Astrocyte of the cerebellum (primary cell): ENCODE measurements at regions of chr20 and their contacts with region 1.

Region 1: GRCh38 chr20:58236612-58237330 is 8.3 kb upstream of the ANKRD60 start:
- DNase-seq: peak; percentile 27
- H3K4me3 ChIP-seq: peak overlapping the region; percentile 43
- CTCF ChIP-seq: peak; percentile 96

Region 2: DNA sequence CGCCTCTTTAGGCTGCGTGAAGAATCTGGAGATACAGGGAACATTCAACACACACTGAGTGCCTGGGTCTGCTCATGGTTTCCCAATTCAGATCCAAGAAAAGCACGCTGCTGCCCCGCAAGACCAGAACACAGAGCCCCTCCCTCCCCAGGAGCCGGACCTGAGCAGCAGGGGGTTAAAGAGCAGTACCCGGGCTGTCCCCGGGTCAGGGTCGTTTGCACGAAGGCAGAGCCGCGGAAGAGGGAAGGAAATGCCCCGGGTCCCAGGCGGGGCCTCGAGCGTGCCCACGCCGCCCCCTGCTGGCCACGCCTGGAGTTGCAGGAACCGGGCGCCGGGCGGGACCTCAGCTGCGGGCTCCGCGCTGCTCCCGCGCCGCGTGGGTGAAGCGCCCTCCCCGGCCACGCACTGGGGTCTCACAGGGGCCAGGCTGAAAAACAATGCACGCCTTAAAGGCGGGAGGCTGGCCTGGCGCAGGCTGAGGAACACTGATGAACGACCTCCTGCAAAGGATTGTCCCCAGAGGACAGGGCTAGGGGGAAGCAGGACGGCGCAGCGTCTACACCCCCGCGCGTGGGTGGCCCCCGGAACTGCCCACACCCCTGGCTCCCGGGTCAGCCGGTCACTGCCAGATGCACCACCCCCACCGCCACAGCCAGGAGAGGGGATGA is 57.2 kb before region 1 on chr20:
- in situ Hi-C with region 1: no loop called
- DNase-seq: peak; percentile 15
- H3K4me3 ChIP-seq: peak overlapping the region; percentile 14
- CTCF ChIP-seq: peak; percentile 87

Region 3: GRCh38 chr20:58271606-58272402 is 35.0 kb after region 1 on chr20:
- in situ Hi-C with region 1: no loop called
- DNase-seq: no peak
- H3K4me3 ChIP-seq: no peak overlapping the region
- CTCF ChIP-seq: no peak

Region 4: DNA sequence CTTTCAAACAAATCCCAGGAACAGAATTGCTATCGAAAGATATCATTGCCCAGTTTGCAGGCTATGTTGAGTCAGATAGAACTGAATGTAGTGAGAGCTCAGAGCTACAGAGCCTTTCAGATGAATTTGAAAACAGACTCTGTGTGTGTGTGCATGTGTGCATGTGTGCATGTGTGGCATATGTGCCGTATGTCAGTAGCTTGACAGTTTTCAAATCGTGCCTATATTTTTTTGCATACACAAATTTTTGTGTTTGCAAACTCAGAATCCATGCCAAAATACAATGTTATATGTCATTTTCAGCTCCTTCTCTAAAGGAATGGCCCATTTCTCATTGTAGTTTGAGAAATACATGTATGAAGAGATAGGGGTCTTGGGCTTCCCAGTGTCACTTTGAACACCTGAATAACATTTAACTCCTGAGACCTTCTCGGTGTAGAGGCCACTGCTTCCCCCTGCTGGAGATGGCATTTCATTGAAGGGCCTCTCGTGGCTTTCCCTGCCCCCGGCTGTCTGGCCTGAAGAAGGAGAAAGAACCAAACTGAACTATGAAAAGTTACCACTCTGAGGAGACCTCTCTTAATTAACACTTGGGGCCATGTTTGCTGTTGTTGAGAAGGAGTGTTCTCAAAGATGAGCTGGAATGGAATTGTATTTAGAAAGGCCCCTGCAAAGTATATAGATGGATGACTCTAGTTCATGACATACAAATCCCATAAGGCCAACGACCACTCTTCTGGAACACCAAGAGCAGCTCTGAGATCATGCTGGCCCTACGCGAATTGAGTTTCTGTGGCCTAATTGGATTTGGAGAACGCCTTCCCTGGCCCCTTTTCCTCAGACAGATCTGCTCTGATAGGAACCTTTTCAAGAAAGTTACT is 211.0 kb after region 1 on chr20:
- in situ Hi-C with region 1: loop called (anchors 10 kb)
- DNase-seq: peak; percentile 28
- H3K4me3 ChIP-seq: no peak overlapping the region
- CTCF ChIP-seq: peak; percentile 78

Region 5: GRCh38 chr20:58550275-58551060 is 313.7 kb after region 1 on chr20:
- in situ Hi-C with region 1: loop called (anchors 5 kb)
- DNase-seq: peak; percentile 61
- H3K4me3 ChIP-seq: no peak overlapping the region
- CTCF ChIP-seq: no peak

Region 6: DNA sequence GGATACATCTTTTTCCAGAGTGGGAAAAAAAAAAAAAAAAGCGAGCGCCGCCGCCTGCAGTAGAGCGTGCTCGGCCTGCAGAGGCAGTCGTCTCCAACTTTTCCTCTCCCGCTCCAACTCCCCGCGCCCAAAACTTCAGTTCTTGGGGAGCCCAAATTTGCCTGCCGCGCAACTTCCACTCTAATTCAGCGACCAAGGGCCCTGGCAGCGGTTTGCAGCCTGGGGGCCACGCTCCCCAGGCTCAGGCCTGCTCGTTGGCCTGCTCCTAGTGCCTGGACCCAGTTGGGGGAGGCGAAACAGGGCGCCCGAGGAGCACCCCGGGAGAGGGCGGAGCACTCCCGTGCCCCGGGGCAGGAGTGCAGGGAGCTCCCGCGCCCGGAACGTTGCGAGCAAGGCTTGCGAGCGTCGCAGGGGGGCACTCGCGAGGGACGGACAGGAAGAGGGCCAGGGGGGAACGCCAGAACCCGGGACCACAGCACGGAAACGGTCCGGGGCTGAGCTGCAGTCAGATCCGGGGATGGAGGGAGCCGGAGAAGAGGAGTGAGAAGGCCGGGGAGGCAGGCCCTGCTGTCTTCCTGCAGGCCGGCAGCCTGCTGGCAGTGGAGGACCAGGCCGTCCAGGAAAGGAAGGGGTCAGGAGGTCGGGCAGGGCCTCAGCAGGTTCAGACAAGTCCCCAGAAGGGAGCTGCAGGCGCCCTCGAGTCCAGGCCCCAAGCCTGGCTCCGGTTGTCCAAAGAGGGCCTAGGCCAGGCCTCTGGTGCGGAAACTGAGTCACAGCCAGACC is 414.2 kb after region 1 on chr20 and contains the start of gene STX16:
- in situ Hi-C with region 1: loop called (anchors 5 kb)
- DNase-seq: peak; percentile 75
- H3K4me3 ChIP-seq: peak within 1 kb of the TSS; percentile 81
- CTCF ChIP-seq: no peak